ENCODE measurements at regions of chr16 and their contacts with region 1.

Region 1: GRCh38 chr16:55842369-55843104 is 9.6 kb upstream of the CES1 start:
- DNase-seq: no peak
- H3K4me3 ChIP-seq: no peak overlapping the region
- H3K27ac ChIP-seq: no peak overlapping the region
- H3K4me1 ChIP-seq: peaks cover 0 to 7% (median 0%) of the 10 kb centered on the region in 6 donors
- H3K27me3 ChIP-seq: peaks cover 0 to 31% (median 0%) of the 10 kb centered on the region in 7 donors
- CTCF ChIP-seq: peak; percentile 58 to 86 (median 79)
- POLR2A ChIP-seq: no peak

Region 2: DNA sequence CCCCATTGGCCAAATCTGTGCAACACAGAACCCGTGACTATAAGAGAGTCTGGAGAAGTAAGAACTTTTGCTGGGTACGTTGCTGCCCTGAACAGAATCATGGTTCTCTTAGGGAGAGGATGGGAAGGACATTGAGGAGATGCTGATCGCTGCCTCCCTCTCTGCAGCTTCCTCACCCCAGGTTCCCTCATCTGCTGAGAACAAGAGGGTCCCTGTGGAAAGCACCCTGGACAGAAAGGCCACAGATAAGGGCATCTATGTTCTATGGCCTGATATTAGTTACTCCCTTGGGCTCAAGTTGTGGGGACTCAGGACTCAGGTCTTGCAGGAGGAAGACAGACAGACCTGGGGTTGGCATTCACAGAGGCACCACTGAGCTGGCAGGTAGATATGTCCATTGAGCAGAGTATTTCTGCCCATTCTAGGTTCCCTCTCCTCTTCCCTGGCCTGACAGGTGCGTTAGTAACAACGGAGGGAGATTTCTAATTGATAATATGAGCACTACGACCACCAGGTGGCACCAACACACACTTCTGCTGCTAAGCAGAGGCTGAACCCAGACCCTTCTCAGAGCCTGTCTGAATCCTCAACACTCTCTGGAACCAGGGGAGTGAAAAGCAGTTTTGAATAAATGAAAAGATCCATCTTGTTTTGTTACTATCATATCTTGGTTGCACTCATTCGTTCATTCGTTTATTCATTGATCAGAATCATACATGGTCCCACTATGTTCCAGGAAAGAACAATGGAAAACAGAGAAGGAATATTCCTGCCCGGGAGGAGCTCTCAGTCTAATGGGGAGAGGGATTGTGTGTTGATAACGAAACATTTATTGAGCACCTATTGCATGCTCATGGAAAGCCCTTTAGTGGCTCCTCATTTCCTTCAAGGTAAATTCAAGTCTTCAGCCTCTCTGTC is 130.3 kb before region 1 on chr16:
- intact Hi-C with region 1: loop called (anchors 2 kb)
- DNase-seq: no peak
- H3K4me3 ChIP-seq: no peak overlapping the region
- H3K27ac ChIP-seq: no peak overlapping the region
- H3K4me1 ChIP-seq: no peaks in the 10 kb centered on the region
- H3K27me3 ChIP-seq: peaks cover 0 to 34% (median 0%) of the 10 kb centered on the region in 7 donors
- CTCF ChIP-seq: peak in 10 of 11 experiments; percentile 29 to 72 (median 66)
- POLR2A ChIP-seq: no peak

Region 3: GRCh38 chr16:55901566-55902217 is 59.2 kb after region 1 on chr16:
- intact Hi-C with region 1: no loop called
- DNase-seq: no peak
- H3K4me3 ChIP-seq: no peak overlapping the region
- H3K27ac ChIP-seq: no peak overlapping the region
- H3K4me1 ChIP-seq: no peaks in the 10 kb centered on the region
- H3K27me3 ChIP-seq: peaks cover 0 to 21% (median 0%) of the 10 kb centered on the region in 7 donors
- CTCF ChIP-seq: no peak
- POLR2A ChIP-seq: no peak

Measured in spleen (tissue), 13 donors.